ENCODE measurements at regions of chr4 and their contacts with region 1.

Region 1: GRCh38 chr4:112231779-112232713 is at the start of gene AP1AR:
- DNase-seq: peak; percentile 80
- H3K4me3 Mint-ChIP-seq: peak within 1 kb of the TSS; percentile 90
- H3K27ac Mint-ChIP-seq: peak within 1 kb of the TSS; percentile 98
- H3K4me1 Mint-ChIP-seq: peaks cover 32% of the 10 kb centered on the region
- H3K27me3 Mint-ChIP-seq: peaks cover under 1% of the 10 kb centered on the region
- total RNA-seq, gene AP1AR: 14.7 to 15.2 TPM

Region 2: DNA sequence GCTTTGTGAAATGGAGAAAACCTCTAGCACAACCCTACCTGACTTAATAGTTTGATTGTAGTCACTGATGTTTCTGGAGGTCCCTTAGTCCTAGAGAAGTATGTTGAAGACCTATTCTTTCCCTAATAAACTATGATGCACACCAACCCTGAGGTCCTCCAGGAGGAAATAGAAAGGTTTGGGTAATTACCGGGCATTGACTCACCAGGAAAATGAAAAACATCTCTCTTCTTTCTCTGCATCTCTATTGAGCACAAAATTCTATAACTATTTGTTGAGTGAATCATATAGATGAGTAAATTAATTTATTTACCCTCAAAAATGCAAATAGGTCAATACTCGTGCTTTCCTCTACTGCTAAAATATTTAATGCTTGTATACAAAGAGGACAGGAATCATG is 669.2 kb before region 1 on chr4:
- CTCF ChIA-PET with region 1: no interaction called
- intact Hi-C with region 1: no loop called
- DNase-seq: no peak
- H3K4me3 Mint-ChIP-seq: no peak overlapping the region
- H3K27ac Mint-ChIP-seq: no peak overlapping the region
- H3K4me1 Mint-ChIP-seq: no peaks in the 10 kb centered on the region
- H3K27me3 Mint-ChIP-seq: no peaks in the 10 kb centered on the region

Region 3: GRCh38 chr4:111871802-111872201 is 360.2 kb before region 1 on chr4:
- CTCF ChIA-PET with region 1: no interaction called
- intact Hi-C with region 1: no loop called
- DNase-seq: no peak
- H3K4me3 Mint-ChIP-seq: no peak overlapping the region
- H3K27ac Mint-ChIP-seq: no peak overlapping the region
- H3K4me1 Mint-ChIP-seq: no peaks in the 10 kb centered on the region
- H3K27me3 Mint-ChIP-seq: no peaks in the 10 kb centered on the region

Region 4: DNA sequence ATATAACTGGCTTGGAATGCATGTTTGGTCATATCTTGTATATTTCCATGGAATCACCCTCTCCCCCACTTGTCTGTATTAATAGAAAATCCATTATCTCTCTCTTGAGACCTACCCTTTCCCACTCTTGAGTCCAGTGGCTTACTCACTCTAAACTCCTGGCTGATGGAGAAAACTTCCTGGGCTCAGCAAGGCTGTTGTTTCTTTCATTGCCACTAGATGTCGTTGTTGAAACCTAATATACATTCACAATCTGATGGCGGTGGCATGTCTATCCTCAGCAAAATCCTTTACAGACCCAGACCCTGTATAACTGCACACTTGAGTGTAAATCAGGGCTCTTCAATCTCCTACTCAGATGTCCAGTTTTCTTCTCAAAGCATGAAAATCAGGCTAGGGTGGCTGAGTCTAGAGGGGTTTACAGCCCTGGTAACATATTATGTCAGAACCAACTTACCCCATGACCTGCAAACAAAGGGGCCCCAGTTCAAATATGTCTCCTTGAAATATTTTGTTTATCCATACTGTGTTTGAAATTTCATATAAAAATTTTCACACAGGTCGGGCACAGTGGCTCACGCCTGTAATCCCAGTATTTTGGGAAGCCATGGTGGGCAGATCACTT is 156.8 kb before region 1 on chr4:
- CTCF ChIA-PET with region 1: interaction called, 3 read pairs
- intact Hi-C with region 1: loop called (anchors 1 kb)
- DNase-seq: peak; percentile 48
- H3K4me3 Mint-ChIP-seq: no peak overlapping the region
- H3K27ac Mint-ChIP-seq: no peak overlapping the region
- H3K4me1 Mint-ChIP-seq: no peaks in the 10 kb centered on the region
- H3K27me3 Mint-ChIP-seq: peaks cover 3% of the 10 kb centered on the region

Region 5: DNA sequence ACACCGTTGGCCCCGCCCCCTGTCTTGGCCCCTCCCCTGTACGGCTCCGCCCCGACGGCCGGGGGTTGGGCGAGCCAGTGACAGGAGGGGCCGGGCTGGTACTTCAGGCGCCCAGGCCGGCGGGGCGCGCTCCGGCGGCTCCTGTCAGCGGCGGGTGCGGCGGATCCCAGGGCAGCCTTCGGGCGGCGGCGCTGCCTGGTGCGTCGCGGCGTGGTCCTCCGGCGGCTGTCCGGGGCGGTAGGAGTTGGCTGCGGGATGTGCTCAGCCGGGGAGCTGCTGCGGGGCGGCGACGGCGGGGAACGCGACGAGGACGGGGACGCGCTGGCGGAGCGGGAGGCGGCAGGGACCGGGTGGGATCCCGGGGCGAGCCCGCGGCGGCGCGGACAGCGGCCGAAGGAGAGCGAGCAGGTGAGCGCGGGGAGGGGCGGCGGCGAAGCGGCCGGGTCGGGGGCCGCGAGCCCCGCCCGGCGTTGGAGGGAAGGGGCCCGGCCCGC is 86.7 kb before region 1 on chr4 and contains the start of gene FAM241A:
- CTCF ChIA-PET with region 1: interaction called, 6 read pairs
- intact Hi-C with region 1: loop called (anchors 1 kb)
- DNase-seq: peak; percentile 89
- H3K4me3 Mint-ChIP-seq: peak within 1 kb of the TSS; percentile 91
- H3K27ac Mint-ChIP-seq: peak within 1 kb of the TSS; percentile 93
- H3K4me1 Mint-ChIP-seq: peaks cover 30% of the 10 kb centered on the region
- H3K27me3 Mint-ChIP-seq: no peaks in the 10 kb centered on the region
- total RNA-seq, gene FAM241A: 2.2 to 2.5 TPM

Region 6: GRCh38 chr4:112214390-112215264 is 17.4 kb before region 1 on chr4:
- CTCF ChIA-PET with region 1: interaction called, 12 read pairs
- intact Hi-C with region 1: loop called (anchors 1 kb)
- DNase-seq: no peak
- H3K4me3 Mint-ChIP-seq: no peak overlapping the region
- H3K27ac Mint-ChIP-seq: no peak overlapping the region
- H3K4me1 Mint-ChIP-seq: peaks cover 14% of the 10 kb centered on the region
- H3K27me3 Mint-ChIP-seq: no peaks in the 10 kb centered on the region

Region 7: GRCh38 chr4:112321776-112322684 is 90.0 kb after region 1 on chr4:
- CTCF ChIA-PET with region 1: interaction called, 3 read pairs
- intact Hi-C with region 1: loop called (anchors 1 kb)
- DNase-seq: peak; percentile 90
- H3K4me3 Mint-ChIP-seq: no peak overlapping the region
- H3K27ac Mint-ChIP-seq: no peak overlapping the region
- H3K4me1 Mint-ChIP-seq: peaks cover 19% of the 10 kb centered on the region
- H3K27me3 Mint-ChIP-seq: no peaks in the 10 kb centered on the region

Region 8: GRCh38 chr4:112343330-112344080 is 111.5 kb after region 1 on chr4:
- CTCF ChIA-PET with region 1: no interaction called
- intact Hi-C with region 1: no loop called
- DNase-seq: no peak
- H3K4me3 Mint-ChIP-seq: no peak overlapping the region
- H3K27ac Mint-ChIP-seq: no peak overlapping the region
- H3K4me1 Mint-ChIP-seq: no peaks in the 10 kb centered on the region
- H3K27me3 Mint-ChIP-seq: no peaks in the 10 kb centered on the region

Region 9: GRCh38 chr4:112636688-112637551 is 404.9 kb after region 1 on chr4 and contains the starts of genes LARP7 and ZGRF1:
- CTCF ChIA-PET with region 1: no interaction called
- intact Hi-C with region 1: loop called (anchors 1 kb)
- DNase-seq: peak; percentile 99
- H3K4me3 Mint-ChIP-seq: no peak within 1 kb of the TSS
- H3K27ac Mint-ChIP-seq: peak within 1 kb of the TSS; percentile 16
- H3K4me1 Mint-ChIP-seq: peaks cover 27% of the 10 kb centered on the region
- H3K27me3 Mint-ChIP-seq: no peaks in the 10 kb centered on the region
- total RNA-seq, gene LARP7: 41.5 to 41.9 TPM
- total RNA-seq, gene ZGRF1: 40.0 to 43.0 TPM